Left cardiac atrium (tissue), 4 donors: ENCODE measurements at regions of chr18 and their contacts with region 1.

Region 1: GRCh38 chr18:36015629-36016028 is 43.1 kb downstream of the RMP24 start:
- DNase-seq: no peak
- ATAC-seq: no peak

Region 2: GRCh38 chr18:36095936-36096519 is 80.4 kb after region 1 on chr18:
- intact Hi-C with region 1: loop called in 1 of 2 experiments (anchors 10 kb)
- DNase-seq: no peak
- ATAC-seq: no peak